SK-N-SH (cell line): ENCODE measurements at regions of chr10 and their contacts with region 1.

Region 1: DNA sequence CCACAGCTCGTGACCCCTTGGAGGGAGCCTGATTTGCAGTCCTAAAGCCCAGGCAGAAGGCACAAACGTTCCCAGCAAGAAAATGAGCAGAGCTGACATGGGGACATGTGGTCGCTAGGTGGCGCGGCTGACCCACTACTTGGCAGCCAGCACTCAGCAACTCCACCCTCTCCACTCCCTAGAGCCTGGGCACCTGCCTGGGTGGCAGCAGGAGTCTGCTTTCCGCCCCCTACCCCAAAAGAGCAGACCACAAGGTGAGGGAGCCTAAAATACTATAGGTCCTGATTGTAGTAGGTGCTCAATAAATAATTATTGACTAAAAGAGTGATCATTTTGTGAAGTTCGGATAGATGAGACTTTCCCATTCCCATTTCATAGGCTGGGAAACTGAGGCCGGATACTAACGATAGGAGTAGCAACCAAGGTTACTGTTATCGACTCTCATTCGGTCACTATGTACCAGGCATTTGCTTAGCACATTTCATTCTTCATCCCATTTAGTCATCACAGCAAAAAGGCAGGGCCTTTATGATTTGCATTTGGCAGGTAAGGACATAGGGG is 57.4 kb downstream of the NEUROG3 start:
- DNase-seq: peak; percentile 86
- H3K4me3 ChIP-seq: no peak overlapping the region; a peak in 1 of 4 replicates
- H3K27ac ChIP-seq: no peak overlapping the region
- H3K4me1 ChIP-seq: no peaks in the 10 kb centered on the region
- H3K27me3 ChIP-seq: no peaks in the 10 kb centered on the region
- CTCF ChIP-seq: peak; percentile 87
- EP300 ChIP-seq: no peak
- RAD21 ChIP-seq: peak; percentile 95

Region 2: DNA sequence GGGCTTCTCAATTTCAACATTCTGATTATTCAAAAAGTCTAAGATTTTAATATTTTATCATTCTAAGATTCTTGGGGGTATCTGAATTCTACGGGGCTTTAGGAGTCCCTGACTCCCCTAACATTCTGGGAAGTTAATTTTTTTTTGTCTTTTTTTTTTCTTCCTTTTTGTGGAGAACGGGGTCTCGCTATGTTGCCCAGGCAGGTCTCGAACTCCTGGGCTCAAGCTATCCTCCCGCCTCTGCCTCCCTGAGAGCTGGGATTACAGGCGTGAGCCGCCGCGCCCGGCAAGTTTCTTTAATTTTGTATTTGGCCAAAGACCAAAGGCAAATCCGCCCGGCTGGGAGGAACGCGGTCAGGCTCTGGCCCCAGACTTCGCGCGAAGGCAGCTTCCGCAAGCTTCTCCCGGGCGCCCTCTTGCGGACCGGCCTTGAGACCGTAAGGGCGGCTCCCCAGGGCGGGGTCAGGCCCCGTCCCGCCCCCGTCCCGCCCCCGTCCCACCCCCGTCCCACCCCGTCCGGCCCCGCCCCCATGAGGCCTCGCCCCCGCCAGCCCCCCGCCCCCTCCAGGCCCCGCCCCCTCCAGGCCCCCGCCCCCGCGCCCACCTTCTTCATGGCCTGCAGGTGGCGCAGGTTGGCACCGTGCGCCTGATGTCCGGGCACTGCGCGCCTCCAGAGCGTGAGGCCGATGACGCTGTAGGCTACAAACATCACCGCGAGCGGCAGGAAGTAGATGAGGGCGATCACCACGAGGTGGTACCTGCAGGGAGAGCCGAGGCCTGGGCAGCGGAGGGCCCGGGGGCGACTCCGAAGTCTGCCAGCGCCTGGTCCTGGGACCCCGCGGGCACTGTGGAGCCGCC is 107.2 kb before region 1 on chr10:
- CTCF ChIA-PET with region 1: interaction called, 30 read pairs
- POLR2A ChIA-PET with region 1: interaction called, 3 read pairs
- DNase-seq: peak; percentile 98
- H3K4me3 ChIP-seq: peak overlapping the region; percentile 35 to 39; a peak in 3 of 4 replicates
- H3K27ac ChIP-seq: peak overlapping the region; percentile 46 to 50; a peak in 3 of 4 replicates
- H3K4me1 ChIP-seq: peaks cover 0 to 20% of the 10 kb centered on the region in 2 experiments; a peak in 2 of 4 replicates
- H3K27me3 ChIP-seq: no peaks in the 10 kb centered on the region
- CTCF ChIP-seq: peak; percentile 51
- EP300 ChIP-seq: no peak
- RAD21 ChIP-seq: peak; percentile 41; the same call in 1 of the 2 replicates

Region 3: DNA sequence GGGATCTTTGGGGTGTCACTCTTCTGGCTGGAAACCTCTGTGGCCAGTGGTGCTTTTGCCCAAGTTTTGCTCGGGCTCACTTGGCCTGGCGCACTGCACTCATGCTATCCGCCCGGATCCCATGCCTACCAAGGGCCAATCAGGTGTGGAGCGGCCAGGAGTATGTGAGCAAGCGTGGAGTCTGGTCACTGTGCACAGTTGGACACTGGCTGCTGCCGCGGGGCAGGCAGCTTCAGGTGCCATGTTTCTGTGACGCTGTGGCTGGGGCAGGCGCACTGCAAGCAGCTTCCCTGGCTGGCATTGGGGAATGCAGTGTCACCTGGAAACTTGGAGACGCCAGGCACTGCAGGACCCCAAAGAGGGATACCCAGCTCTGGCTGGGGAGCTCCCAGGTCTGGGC is 12.2 kb after region 1 on chr10:
- CTCF ChIA-PET with region 1: interaction called, 41 read pairs
- POLR2A ChIA-PET with region 1: no interaction called
- DNase-seq: no peak
- H3K4me3 ChIP-seq: no peak overlapping the region
- H3K27ac ChIP-seq: no peak overlapping the region
- H3K4me1 ChIP-seq: no peaks in the 10 kb centered on the region
- H3K27me3 ChIP-seq: peaks cover 21% of the 10 kb centered on the region; the same call in 1 of the 2 replicates
- CTCF ChIP-seq: no peak
- EP300 ChIP-seq: no peak
- RAD21 ChIP-seq: no peak

Region 4: DNA sequence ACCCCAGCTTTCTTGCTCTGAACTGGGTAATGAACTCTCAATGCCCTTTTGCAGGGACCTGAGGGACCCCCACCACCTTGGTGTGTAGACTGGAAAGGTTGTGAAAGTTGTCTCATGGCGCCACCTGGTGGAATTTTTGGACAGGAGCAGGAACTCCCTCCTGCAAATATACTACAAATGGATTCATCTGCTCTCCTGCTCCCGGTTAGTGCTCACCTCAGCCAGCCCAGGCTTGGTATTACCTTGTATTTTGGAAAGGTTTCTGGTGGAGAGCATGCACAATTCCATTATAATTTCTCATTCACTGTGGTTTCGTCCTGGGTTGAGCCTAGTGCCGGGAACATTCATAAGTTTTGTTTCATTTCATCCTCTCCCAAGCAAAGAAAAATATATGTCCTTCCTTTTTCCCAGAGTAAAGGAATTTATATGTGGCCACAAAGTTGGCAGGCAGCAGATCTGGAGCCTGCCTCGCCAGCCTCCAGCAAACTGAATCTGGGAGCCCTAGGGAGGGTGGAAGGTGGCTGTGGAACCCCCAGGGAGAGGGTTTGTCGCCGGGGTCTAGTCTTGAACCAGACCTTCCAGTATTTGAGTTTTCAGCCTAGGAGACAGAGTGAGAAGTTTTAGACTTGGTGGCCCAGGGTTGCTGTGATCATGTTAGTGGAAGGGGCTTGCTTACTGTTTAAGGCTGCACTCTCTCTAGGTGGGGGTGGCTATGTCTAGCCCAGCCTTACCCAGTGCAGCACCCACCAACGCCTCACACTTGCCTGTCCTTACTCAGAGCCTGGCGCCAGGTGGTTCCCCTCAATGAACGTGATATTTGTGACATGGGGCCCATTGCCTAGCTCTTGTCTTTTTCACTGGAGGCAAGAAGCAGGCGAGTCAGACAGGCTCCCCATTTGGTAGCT is 123.8 kb after region 1 on chr10:
- CTCF ChIA-PET with region 1: interaction called, 364 read pairs
- POLR2A ChIA-PET with region 1: interaction called, 9 read pairs
- DNase-seq: peak; percentile 81
- H3K4me3 ChIP-seq: peak overlapping the region in 1 of 2 experiments; percentile 48; a peak in 1 of 4 replicates
- H3K27ac ChIP-seq: no peak overlapping the region
- H3K4me1 ChIP-seq: no peaks in the 10 kb centered on the region; a peak in 1 of 4 replicates
- H3K27me3 ChIP-seq: no peaks in the 10 kb centered on the region
- CTCF ChIP-seq: peak; percentile 93
- EP300 ChIP-seq: no peak
- RAD21 ChIP-seq: peak; percentile 90

Region 5: DNA sequence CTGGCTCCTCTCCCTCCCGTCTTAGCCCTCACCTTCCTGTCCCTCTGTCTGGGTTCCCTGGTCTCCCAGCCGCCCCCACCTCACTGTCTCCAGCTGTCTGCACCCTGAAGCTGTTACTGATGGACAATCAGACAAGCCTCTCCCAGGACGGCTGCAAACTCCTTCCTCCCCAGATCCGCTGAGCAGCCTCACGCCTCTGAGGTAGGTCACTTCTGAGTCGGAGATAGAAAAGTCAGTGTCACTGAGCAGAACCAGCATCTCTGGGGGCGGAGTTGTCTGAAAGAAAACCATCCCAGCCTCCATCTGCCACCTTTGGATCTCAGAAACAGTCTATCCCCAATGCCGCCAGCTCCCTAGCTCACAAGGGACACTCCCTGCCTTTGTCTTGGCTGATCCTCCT is 141.7 kb after region 1 on chr10:
- CTCF ChIA-PET with region 1: interaction called, 12 read pairs
- POLR2A ChIA-PET with region 1: no interaction called
- DNase-seq: no peak
- H3K4me3 ChIP-seq: no peak overlapping the region
- H3K27ac ChIP-seq: no peak overlapping the region
- H3K4me1 ChIP-seq: peaks cover 0 to 31% of the 10 kb centered on the region in 2 experiments; a peak in 1 of 4 replicates
- H3K27me3 ChIP-seq: peaks cover 43% of the 10 kb centered on the region
- CTCF ChIP-seq: no peak
- EP300 ChIP-seq: no peak
- RAD21 ChIP-seq: no peak